Activated CD4-positive, alpha-beta T cell treated with anti-CD3 and anti-CD28 coated beads, Interleukin-2, amount 10 ng/mL, durations not matched to agents 7 days and 5 days (primary cell): ENCODE measurements at regions of chr11 and their contacts with region 1.

Region 1: GRCh38 chr11:47464483-47464882 is 15.5 kb upstream of the RAPSN start:
- DNase-seq: no peak
- H3K4me3 Mint-ChIP-seq: no peak overlapping the region
- H3K27ac Mint-ChIP-seq: no peak overlapping the region
- H3K4me1 Mint-ChIP-seq: peaks cover 5% of the 10 kb centered on the region
- H3K27me3 Mint-ChIP-seq: no peaks in the 10 kb centered on the region

Region 2: DNA sequence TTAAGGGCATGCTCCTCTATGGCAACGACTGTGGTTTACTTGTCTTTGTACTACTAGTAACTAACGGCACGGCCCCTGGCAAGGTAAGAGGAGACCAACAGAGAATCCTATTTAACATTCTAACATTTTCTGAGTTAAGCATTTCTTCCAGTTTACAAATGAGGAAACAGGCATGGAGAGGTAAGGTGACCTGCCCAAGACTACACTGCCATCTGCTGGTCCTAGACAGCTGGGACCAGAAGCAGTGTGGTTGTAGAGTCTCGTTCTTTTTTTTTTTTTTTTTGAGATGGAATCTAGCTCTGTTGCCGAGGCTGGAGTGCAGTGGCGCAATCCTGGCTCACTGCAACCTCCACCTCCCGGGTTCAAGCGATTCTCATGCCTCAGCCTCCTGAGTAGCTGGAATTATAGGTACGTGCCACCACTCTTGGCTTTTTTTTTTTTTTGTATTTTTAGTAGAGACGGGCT is 10.3 kb before region 1 on chr11:
- CTCF ChIA-PET with region 1: interaction called, 10 read pairs
- POLR2A ChIA-PET with region 1: no interaction called
- DNase-seq: peak; percentile 83
- H3K4me3 Mint-ChIP-seq: no peak overlapping the region
- H3K27ac Mint-ChIP-seq: no peak overlapping the region
- H3K4me1 Mint-ChIP-seq: peaks cover 5% of the 10 kb centered on the region
- H3K27me3 Mint-ChIP-seq: no peaks in the 10 kb centered on the region